ENCODE measurements at regions of chr18 and their contacts with region 1.

Region 1: DNA sequence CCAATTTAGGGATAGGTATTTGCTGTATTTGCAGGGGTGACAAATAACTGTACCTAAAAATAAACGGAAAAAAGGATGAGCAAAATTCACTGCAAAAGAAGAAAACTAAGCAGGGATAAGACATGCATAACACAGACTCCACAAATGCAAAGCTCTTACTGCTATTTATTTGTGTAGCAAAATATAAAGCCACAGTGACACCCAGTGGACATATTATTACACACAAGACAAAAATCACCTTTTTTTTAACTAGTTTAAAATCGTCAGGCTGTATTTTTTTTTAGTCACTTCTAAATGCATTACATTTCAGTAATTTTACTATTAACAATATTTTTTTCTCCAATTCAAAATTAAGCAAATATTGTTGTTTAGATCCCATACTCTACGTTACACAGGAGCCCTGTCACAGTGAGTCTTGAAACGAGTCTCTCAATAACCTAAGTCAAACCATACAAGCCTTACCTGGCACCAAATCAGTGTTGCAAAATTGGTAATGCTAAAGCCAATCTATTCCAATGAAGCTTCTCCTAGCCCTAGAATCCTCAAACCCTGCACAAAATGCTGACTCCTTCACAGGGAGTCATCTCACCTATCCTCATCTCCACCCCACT is 23.7 kb downstream of the METTL4 start:
- H3K4me3 ChIP-seq: no peak overlapping the region
- H3K27ac ChIP-seq: no peak overlapping the region
- H3K4me1 ChIP-seq: no peaks in the 10 kb centered on the region
- CTCF ChIP-seq: no peak

Region 2: DNA sequence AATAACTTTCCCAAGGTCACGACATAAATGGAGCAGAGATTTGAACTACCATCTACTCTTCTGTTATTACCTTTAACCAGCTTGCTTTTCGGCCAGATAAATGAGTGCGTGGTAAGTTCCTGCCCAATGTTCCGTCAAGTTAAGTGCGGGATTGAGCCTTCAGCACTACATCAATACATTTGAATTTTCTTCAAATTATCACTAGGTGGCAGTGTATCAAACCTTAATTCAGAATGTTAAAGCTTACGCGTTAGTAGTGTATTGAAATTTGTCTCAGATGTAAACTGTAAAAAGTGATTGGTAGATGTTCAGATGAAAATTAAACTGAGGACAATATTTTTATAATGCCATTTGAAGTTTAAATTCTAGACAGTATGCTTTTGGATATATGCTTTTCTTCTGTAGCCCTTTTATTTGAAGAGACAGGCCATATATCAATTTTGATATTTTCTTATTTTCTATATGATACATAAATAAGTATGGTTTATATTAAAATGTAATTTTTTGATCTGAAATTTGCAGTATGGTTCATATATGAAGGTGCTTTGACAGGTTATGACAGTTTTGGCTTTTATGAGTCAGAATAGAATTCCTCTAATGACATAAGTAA is 961.6 kb before region 1 on chr18:
- CTCF ChIA-PET with region 1: interaction called, 10 read pairs
- POLR2A ChIA-PET with region 1: no interaction called
- H3K4me3 ChIP-seq: no peak overlapping the region
- H3K27ac ChIP-seq: no peak overlapping the region
- H3K4me1 ChIP-seq: no peaks in the 10 kb centered on the region
- CTCF ChIP-seq: no peak

Region 3: DNA sequence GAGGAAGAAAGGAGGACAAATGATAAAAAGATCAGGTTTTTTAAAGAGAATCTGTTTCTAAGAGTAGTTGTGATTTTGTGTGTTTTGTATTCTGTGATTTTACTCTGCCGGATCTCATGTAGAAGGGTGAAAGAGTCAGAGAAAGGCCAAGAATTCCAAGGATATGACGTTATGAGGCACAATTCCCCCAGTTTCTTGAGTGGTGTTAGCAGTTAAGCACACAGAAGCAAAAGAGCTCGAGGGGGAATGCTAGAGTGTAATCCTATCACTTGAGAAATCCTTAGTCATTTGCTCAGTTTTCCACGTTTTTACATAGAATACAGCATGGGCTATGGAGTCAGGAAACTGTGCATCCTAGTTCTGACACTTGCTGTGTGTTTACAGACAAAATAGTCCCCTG is 11.1 kb before region 1 on chr18:
- CTCF ChIA-PET with region 1: interaction called, 19 read pairs
- POLR2A ChIA-PET with region 1: no interaction called
- H3K4me3 ChIP-seq: no peak overlapping the region
- H3K27ac ChIP-seq: no peak overlapping the region
- H3K4me1 ChIP-seq: peaks cover 24% of the 10 kb centered on the region
- CTCF ChIP-seq: no peak

Region 4: DNA sequence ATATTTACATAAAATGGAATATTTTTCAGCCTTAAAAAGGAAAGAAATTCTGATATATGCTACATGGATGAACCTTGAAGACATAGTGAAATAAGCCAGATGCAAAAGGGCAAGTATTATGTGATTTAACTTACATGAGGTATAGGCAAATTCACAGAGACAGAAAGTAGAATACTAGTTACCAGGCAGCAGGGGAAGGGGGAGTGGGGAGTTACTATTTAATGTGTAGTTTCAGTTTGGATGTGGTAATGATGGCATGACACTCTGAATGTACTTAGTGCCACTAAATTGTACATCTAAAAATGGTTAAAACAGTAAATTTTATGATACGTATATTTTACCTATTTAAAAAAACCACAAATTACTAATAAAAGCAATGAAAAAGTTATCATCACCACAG is 11.7 kb after region 1 on chr18:
- CTCF ChIA-PET with region 1: interaction called, 36 read pairs
- POLR2A ChIA-PET with region 1: interaction called, 3 read pairs
- H3K4me3 ChIP-seq: no peak overlapping the region
- H3K27ac ChIP-seq: no peak overlapping the region
- H3K4me1 ChIP-seq: no peaks in the 10 kb centered on the region; the same call in 1 of the 2 replicates
- CTCF ChIP-seq: no peak

Region 5: GRCh38 chr18:2672410-2672809 is 124.8 kb after region 1 on chr18:
- CTCF ChIA-PET with region 1: no interaction called
- POLR2A ChIA-PET with region 1: no interaction called
- H3K4me3 ChIP-seq: no peak overlapping the region
- H3K27ac ChIP-seq: no peak overlapping the region
- H3K4me1 ChIP-seq: no peaks in the 10 kb centered on the region
- CTCF ChIP-seq: no peak